Activated CD8-positive, alpha-beta memory T cell treated with anti-CD3 and anti-CD28 coated beads, Interleukin-2, amount 10 ng/mL, durations not matched to agents 7 days and 5 days (primary cell): ENCODE measurements at regions of chr17 and their contacts with region 1.

Region 1: GRCh38 chr17:7045909-7046724 is 2.2 kb upstream of the SLC16A11 start:
- DNase-seq: peak; percentile 68
- ATAC-seq: peak; percentile 31
- H3K4me3 Mint-ChIP-seq: peak overlapping the region; percentile 89
- H3K27ac Mint-ChIP-seq: peak overlapping the region; percentile 89
- H3K4me1 Mint-ChIP-seq: peaks cover 39% of the 10 kb centered on the region
- H3K27me3 Mint-ChIP-seq: peaks cover 10% of the 10 kb centered on the region

Region 2: DNA sequence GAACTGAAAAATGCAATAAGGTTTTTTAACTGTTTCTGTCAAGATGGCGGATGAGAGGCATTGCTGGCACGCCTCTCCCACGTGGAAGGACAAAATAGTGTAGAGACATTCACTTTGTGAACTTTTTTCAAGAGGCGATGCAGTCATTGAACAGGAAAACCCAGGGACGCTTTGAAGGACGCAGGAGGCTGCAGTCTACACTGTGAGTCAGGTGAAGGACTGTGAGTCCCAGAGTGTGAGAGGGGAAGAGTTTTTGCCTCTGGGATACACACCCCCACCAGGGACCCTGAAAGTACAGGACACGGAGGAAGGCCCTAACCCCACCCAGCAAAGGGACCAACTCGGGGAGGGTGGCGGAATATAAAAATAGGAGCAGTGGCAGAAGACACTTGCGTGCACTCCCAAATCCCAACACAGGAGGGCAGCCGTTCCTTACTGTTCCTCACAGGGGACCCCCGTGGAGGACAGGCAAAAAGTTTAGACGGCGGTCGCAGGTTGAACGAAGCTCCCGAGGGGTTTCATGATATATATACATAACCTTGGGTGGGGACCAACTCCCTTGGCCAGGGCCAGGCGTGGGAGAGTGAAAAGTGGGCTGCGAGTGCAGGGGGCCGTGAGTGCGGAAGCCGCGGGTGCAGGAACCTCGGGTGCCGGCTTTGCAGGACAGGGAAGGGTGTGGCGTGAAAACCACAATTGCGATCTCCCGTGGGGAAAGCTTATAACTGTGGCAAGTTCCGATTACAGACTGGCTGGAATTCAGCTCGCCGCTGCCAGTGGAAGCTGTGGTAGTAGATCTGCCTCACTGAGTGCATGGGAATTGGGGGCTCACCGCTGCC is 132.3 kb before region 1 on chr17:
- CTCF ChIA-PET with region 1: interaction called, 11 read pairs
- DNase-seq: peak; percentile 88
- ATAC-seq: peak; percentile 86
- H3K4me3 Mint-ChIP-seq: peak overlapping the region; percentile 72
- H3K27ac Mint-ChIP-seq: peak overlapping the region; percentile 54
- H3K4me1 Mint-ChIP-seq: peaks cover 23% of the 10 kb centered on the region
- H3K27me3 Mint-ChIP-seq: peaks cover 16% of the 10 kb centered on the region

Region 3: DNA sequence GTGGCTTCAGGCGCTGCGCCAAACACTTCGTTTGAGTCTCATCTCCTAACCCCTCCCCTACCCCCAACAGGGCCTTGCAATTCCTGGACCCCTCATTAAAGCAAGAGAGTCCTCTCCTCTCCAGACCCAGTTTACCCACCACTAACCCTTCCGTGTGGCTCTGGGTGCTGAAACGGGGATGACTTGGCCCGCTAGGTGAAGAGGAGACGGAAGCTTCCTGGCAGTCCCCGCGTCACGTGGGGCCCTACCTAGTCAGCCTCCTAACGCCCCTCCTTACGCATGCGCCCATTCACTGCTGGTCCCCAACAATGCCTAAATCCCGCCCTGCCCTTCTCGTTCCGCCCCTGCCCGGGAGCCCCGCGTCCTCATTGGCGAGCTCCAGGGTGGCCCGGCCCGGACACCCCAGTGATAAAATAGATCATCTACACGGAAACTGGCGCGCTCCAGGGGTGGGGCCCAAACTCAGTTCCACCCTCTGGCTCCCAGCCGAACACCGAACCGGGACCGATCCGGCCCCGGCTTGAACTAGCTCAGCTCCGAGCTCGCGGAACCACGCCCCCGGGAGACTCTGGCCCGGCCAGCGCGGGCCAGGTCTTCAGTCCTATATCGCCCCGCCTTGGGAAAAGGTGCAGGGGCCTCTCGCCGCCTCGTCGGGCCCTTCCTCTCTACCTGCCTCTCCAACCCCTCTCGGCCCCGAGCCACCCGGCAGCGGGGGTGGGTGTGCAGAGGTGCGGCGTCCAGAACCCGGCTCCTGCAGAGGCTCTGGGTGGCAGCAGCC is 10.3 kb before region 1 on chr17 and contains the start of gene SLC16A13:
- CTCF ChIA-PET with region 1: interaction called, 21 read pairs
- DNase-seq: peak; percentile 100
- ATAC-seq: peak; percentile 95
- H3K4me3 Mint-ChIP-seq: peak within 1 kb of the TSS; percentile 88
- H3K27ac Mint-ChIP-seq: peak within 1 kb of the TSS; percentile 95
- H3K4me1 Mint-ChIP-seq: peaks cover 67% of the 10 kb centered on the region
- H3K27me3 Mint-ChIP-seq: no peaks in the 10 kb centered on the region
- total RNA-seq, gene SLC16A13: 19.0 to 34.1 TPM

Region 4: DNA sequence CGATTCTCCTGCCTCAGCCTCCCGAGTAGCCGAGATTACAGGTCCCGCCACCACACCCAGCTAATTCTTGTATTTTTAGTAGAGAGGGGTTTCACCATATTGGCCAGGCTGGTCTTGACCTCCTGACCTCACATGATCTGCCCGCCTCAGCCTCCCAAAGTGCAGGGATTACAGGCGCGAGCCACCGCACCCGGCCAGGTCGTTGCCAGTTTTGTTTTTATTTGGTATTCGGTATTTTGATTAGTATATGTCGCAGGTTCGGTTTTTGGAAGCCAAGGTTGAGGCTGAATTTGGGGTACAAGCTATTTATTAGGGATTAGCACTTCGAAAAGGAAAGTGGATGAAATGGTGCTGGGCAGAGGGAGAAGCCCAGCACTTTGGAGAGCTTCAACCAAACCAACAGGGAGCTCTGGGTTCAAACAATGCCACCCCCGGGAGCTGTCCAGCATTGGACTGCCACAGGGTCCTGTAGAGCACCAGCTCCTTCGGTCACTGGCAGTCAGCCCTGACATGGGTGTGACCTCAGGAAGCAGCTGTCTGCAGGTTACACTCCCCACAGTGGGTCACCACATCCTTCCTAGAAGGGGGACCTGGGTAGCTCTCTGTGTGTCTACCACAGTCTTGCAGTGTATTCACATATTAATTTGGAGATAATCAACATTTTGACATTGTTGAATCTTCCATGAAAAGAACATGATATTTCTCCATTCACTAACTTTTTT is 35.4 kb after region 1 on chr17:
- CTCF ChIA-PET with region 1: interaction called, 10 read pairs
- DNase-seq: peak; percentile 90
- ATAC-seq: peak; percentile 91
- H3K4me3 Mint-ChIP-seq: no peak overlapping the region
- H3K27ac Mint-ChIP-seq: no peak overlapping the region
- H3K4me1 Mint-ChIP-seq: peaks cover 28% of the 10 kb centered on the region
- H3K27me3 Mint-ChIP-seq: peaks cover 42% of the 10 kb centered on the region

Region 5: GRCh38 chr17:7177196-7177953 is 131.3 kb after region 1 on chr17:
- CTCF ChIA-PET with region 1: interaction called, 41 read pairs
- DNase-seq: peak; percentile 75
- ATAC-seq: peak; percentile 73
- H3K4me3 Mint-ChIP-seq: peak overlapping the region; percentile 53
- H3K27ac Mint-ChIP-seq: no peak overlapping the region
- H3K4me1 Mint-ChIP-seq: peaks cover 9% of the 10 kb centered on the region
- H3K27me3 Mint-ChIP-seq: peaks cover 14% of the 10 kb centered on the region